Activated CD8-positive, alpha-beta T cell treated with anti-CD3 and anti-CD28 coated beads, Interleukin-2, amount 10 ng/mL, durations not matched to agents 7 days and 5 days (primary cell): ENCODE measurements at regions of chr2 and their contacts with region 1.

Region 1: DNA sequence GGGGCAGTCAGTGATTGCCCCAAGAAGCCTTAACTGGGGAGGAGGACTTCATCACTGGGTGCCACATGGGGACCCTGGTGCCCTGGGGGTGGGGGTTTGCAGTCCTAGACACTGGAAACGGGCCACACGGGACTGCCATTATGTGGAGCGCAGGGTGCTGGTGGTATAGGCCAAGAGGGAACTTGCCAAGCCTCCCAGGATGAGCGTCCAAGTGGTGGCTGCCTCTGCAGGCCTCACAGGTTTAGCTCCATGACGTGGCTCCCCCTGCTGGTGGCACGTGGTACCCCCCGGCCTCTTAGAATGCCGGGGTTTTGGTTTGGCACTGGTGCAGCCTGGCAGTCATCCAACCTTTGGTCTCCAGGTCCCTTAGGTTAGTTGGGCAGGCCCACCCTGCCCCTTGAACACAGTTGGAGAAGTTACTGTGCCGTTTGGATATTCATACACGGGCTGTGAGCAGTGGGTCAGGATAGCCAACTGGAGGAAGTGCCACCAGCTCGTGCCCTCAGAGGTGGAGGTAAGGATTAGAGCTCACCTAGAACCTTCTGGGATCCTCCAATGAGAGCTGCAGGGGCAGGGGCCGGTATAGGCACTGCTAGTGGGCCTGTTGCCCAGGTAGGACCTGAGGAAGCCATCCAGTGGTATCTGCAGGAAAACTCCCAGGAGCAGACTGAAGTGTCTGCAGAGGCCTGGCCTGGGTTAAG is 5.6 kb downstream of the PTMA start:
- DNase-seq: peak; percentile 92
- ATAC-seq: peak; percentile 18
- H3K4me3 Mint-ChIP-seq: peak overlapping the region; percentile 63
- H3K27ac Mint-ChIP-seq: peak overlapping the region; percentile 94
- H3K4me1 Mint-ChIP-seq: peaks cover 35% of the 10 kb centered on the region
- H3K27me3 Mint-ChIP-seq: no peaks in the 10 kb centered on the region

Region 2: DNA sequence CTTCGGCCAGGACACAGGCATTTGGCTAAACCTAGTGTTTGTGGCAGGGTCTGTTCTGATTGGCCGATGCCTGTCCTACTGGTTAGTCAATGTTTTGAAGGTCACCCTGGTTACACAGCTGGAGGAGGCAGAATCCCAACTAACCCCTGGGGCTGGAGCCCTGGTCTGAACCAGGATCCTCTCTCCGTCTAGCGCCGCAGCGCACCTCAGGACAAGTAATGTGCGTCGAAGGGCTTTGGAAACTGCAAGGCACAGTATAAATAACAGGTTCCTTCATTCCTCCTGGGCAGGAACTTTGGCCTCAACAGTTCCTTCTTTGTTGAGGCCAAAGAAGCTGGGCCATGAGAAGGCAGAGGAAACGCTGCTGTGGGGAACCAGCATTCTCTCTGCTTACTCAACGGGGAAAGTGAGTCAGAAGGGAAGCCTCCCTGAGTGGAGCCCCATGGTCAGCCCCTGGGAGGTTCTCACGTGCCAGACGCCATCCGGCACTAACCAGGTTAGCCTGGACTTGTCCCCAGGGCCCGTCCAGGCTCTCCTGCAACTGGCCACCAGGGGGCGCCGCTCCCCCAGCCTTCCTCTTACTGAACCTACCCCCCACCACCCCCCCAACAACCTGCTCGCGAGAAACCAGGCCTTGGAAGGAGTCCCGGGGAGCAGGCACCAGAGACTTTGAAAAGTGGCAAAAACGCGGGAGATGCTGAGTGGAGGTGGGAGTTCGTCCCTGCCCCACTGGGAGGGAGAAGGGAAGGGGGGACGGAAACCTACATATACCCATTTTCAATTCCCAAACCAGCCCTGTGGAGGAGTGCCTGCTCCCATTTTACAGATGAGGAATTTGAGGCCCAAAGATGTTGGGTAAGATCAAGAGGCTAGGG is 101.5 kb before region 1 on chr2:
- CTCF ChIA-PET with region 1: interaction called, 267 read pairs
- POLR2A ChIA-PET with region 1: interaction called, 129 read pairs
- DNase-seq: peak; percentile 95
- ATAC-seq: peak; percentile 57
- H3K4me3 Mint-ChIP-seq: peak overlapping the region; percentile 79
- H3K27ac Mint-ChIP-seq: peak overlapping the region; percentile 92
- H3K4me1 Mint-ChIP-seq: peaks cover 48% of the 10 kb centered on the region
- H3K27me3 Mint-ChIP-seq: peaks cover 2% of the 10 kb centered on the region

Region 3: DNA sequence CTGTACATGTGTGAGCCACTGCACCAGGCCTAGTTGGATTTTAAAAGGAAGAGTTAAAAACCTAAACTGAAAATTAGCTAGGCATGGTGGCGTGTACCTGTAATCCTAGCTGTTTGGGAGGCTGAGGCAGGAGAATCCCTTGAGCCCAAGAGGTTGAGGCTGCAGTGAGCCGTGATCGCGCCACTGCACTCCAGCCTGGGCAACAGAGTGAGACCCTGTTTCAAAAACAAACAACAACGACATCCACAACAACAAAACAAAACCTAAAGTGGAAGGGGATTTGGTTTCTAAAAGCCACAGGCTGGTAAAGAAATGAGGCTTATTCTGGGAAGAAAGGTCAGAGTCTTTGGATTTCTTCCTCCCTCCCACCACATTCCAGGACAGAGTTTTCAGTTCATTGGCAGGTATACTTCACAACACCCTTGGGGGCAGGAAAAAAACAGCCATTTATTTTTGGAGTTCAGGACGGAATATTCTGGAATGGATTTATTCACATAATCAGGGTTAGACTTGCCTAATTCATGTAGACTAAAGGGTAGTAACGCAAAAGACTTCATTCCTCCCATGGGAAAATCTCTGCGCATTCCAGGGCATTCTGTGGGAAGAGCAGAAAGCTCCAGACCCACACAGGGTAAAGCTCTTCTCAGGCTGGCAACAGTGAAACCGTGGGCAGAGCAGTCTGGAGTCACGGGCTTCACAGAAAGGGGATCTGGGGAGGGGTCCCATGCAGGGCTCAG is 86.3 kb before region 1 on chr2:
- CTCF ChIA-PET with region 1: interaction called, 10 read pairs
- POLR2A ChIA-PET with region 1: no interaction called
- DNase-seq: no peak
- ATAC-seq: peak; percentile 62
- H3K4me3 Mint-ChIP-seq: peak overlapping the region; percentile 59
- H3K27ac Mint-ChIP-seq: peak overlapping the region; percentile 91
- H3K4me1 Mint-ChIP-seq: peaks cover 20% of the 10 kb centered on the region
- H3K27me3 Mint-ChIP-seq: no peaks in the 10 kb centered on the region

Region 4: DNA sequence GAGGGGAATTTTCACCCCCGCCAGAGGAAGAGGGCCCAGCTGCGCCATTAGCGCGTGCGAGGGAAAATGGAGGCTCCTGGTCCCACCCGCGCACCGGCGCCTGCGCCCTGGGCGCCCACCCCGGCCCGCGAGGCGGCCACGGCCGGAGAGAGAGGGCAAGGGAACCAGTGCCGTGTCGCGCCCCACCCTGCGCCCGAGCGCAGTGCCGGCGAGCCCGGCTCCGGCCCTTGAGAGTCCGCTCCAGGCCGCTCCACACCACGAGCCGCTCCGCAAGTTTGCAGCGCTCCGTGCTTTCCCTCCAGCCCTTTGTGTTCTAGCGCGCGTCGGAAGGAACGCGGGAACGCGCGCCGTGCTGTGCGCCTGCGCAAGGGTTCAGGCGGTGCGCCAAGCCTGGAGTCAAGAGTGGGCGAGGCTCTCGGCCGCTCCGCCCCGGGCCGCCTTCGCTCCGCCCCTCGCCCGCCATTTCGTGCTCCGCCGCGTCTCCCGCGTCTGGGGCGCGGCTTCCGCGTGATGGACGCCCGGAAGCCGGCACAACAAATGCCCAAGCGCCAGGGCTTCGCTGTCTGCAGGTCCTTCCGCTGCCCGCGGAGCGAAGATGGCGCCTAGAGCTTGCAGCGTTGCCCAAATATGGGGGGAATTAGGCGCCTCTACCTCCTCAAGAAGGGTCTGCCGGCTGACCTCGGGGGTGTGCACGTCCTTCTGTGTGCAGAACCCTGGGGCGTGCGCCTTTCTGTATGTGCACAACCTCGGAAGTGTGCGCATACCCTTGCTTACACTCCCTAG is 51.7 kb before region 1 on chr2:
- CTCF ChIA-PET with region 1: interaction called, 16 read pairs
- POLR2A ChIA-PET with region 1: interaction called, 7 read pairs
- DNase-seq: peak; percentile 97
- ATAC-seq: peak; percentile 96
- H3K4me3 Mint-ChIP-seq: peak overlapping the region; percentile 71
- H3K27ac Mint-ChIP-seq: peak overlapping the region; percentile 94
- H3K4me1 Mint-ChIP-seq: peaks cover 38% of the 10 kb centered on the region
- H3K27me3 Mint-ChIP-seq: no peaks in the 10 kb centered on the region

Region 5: DNA sequence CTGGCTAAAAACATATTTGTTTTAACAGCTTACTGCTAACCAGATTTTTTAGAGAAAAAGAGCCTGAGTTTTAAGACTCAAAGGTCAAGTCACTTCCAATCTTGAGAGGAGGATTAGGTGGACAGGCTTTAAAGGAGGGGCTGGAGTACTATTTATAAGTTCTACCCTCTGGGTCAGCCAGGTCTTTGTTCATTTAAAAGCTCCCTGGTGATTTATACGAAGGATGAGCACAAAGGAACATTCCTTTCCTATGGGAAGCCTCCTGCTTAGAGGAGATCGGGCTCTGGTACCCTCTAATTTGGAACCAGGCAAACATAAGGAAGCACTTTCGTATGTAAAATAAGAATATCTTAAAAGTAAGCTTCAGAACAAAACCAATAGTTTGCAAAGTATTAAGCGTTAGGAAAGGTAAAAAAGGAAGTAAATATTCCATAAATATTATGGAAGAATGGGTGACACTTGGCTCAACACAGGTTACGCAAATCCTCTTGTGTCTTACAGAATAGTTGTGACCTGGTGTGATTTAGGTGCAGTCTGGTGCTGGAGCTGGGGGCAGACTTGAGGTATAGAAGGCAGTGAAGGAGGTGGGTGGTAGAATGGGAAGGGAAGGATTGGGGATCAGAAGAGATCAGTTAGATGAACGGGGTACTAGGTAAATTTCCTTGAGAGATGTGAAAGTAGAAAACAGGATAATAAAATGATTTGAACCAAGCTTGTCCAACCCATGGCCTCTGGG is 31.6 kb after region 1 on chr2:
- CTCF ChIA-PET with region 1: interaction called, 10 read pairs
- POLR2A ChIA-PET with region 1: no interaction called
- DNase-seq: no peak
- ATAC-seq: no peak
- H3K4me3 Mint-ChIP-seq: no peak overlapping the region
- H3K27ac Mint-ChIP-seq: no peak overlapping the region
- H3K4me1 Mint-ChIP-seq: peaks cover 8% of the 10 kb centered on the region
- H3K27me3 Mint-ChIP-seq: no peaks in the 10 kb centered on the region

Region 6: GRCh38 chr2:231780123-231780908 is 66.4 kb after region 1 on chr2:
- CTCF ChIA-PET with region 1: interaction called, 17 read pairs
- POLR2A ChIA-PET with region 1: no interaction called
- DNase-seq: peak; percentile 30
- ATAC-seq: no peak
- H3K4me3 Mint-ChIP-seq: peak overlapping the region; percentile 94
- H3K27ac Mint-ChIP-seq: peak overlapping the region; percentile 60
- H3K4me1 Mint-ChIP-seq: peaks cover 36% of the 10 kb centered on the region
- H3K27me3 Mint-ChIP-seq: peaks cover 4% of the 10 kb centered on the region